A673 (cell line): ENCODE measurements at regions of chr1 and their contacts with region 1.

Region 1: DNA sequence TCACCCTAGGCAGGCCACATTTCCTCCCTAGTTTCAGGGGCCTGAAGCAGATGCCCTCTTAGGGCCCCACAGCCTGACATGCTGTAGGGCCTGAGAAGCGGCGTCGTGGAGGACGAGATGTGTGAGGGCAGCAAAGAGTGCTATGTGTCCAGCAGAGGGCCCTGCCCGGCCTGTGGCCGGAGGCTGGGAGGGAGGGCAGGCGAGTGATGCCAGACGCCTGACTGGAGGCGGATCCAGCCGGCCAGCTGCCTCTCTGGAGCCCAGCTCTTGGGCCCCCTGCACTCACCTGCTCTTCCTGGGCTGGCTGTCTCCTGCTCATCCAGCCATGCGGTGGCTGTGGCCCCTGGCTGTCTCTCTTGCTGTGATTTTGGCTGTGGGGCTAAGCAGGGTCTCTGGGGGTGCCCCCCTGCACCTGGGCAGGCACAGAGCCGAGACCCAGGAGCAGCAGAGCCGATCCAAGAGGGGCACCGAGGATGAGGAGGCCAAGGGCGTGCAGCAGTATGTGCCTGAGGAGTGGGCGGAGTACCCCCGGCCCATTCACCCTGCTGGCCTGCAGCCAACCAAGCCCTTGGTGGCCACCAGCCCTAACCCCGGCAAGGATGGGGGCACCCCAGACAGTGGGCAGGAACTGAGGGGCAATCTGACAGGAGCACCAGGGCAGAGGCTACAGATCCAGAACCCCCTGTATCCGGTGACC is at the start of gene GPR37L1:
- DNase-seq: no peak
- H3K4me3 ChIP-seq: no peak within 1 kb of the TSS
- H3K27ac ChIP-seq: no peak within 1 kb of the TSS
- H3K4me1 ChIP-seq: peaks cover 4% of the 10 kb centered on the region
- H3K27me3 ChIP-seq: no peaks in the 10 kb centered on the region
- CTCF ChIP-seq: no peak
- total RNA-seq, gene GPR37L1: not detected in 2 replicates

Region 2: GRCh38 chr1:202009326-202010179 is 113.2 kb before region 1 on chr1:
- CTCF ChIA-PET with region 1: interaction called, 3 read pairs
- POLR2A ChIA-PET with region 1: no interaction called
- intact Hi-C with region 1: loop called (anchors 1 kb)
- DNase-seq: peak; percentile 83
- H3K4me3 ChIP-seq: no peak overlapping the region
- H3K27ac ChIP-seq: no peak overlapping the region
- H3K4me1 ChIP-seq: no peaks in the 10 kb centered on the region
- H3K27me3 ChIP-seq: no peaks in the 10 kb centered on the region
- CTCF ChIP-seq: peak; percentile 90

Region 3: GRCh38 chr1:202365092-202365815 is 242.5 kb after region 1 on chr1:
- CTCF ChIA-PET with region 1: no interaction called
- POLR2A ChIA-PET with region 1: no interaction called
- intact Hi-C with region 1: no loop called
- DNase-seq: no peak
- H3K4me3 ChIP-seq: no peak overlapping the region
- H3K27ac ChIP-seq: no peak overlapping the region
- H3K4me1 ChIP-seq: no peaks in the 10 kb centered on the region
- H3K27me3 ChIP-seq: no peaks in the 10 kb centered on the region
- CTCF ChIP-seq: no peak